CD14-positive monocyte (primary cell): ENCODE measurements at regions of chr17 and their contacts with region 1.

Region 1: DNA sequence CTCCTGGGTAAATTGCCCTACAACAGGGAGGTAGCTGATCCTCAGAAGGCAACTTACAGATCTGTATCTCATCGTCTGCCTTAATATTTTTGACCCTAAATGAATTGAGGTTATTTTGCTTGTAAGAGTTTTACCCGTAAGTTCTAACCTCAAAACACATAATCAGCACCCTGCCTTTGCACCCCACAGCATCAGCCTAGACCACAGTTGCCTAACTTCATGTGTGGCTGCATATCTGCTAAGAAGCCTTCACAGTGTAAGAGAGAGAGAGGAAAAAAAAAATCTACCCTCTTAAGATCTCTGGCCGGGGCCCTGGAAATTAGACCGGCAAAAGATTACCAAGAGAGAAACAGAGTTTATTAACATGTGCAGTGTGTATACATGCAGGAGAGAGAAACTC is 76.9 kb downstream of the ARHGAP44 start:
- DNase-seq: no peak
- H3K4me3 ChIP-seq: no peak overlapping the region
- H3K4me3 Mint-ChIP-seq: no peak overlapping the region
- H3K27ac ChIP-seq: no peak overlapping the region
- H3K27ac Mint-ChIP-seq: no peak overlapping the region
- H3K4me1 ChIP-seq: no peaks in the 10 kb centered on the region
- H3K4me1 Mint-ChIP-seq: no peaks in the 10 kb centered on the region
- H3K27me3 ChIP-seq: no peaks in the 10 kb centered on the region
- H3K27me3 Mint-ChIP-seq: no peaks in the 10 kb centered on the region
- CTCF ChIP-seq: no peak

Region 2: GRCh38 chr17:12815642-12816141 is 50.6 kb before region 1 on chr17:
- intact Hi-C with region 1: loop called in 1 of 2 experiments (anchors 10 kb)
- DNase-seq: no peak
- H3K4me3 ChIP-seq: no peak overlapping the region
- H3K4me3 Mint-ChIP-seq: no peak overlapping the region
- H3K27ac ChIP-seq: no peak overlapping the region
- H3K27ac Mint-ChIP-seq: no peak overlapping the region
- H3K4me1 ChIP-seq: no peaks in the 10 kb centered on the region
- H3K4me1 Mint-ChIP-seq: no peaks in the 10 kb centered on the region
- H3K27me3 ChIP-seq: no peaks in the 10 kb centered on the region
- H3K27me3 Mint-ChIP-seq: peaks cover 0 to 1% (median 0%) of the 10 kb centered on the region in 3 donors
- CTCF ChIP-seq: no peak

Region 3: DNA sequence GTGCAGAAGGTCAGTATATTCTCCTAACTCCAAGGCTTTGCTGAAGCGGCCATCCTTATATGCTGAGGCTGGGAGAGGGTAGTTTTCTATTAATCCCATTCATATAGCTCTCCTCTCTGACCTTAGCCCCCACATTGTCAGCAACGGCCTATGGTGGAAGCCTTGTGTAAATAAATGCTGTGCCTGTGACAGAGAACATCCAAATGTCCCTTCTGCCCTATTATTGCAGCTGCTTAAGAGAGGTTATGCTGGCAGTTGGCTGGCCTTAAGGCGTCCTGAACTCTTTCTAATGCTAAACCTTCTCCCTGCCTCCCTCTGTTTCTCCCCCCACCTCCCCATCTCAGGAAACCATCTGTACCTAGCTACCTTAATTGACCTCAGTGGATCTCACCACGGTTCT is 23.3 kb before region 1 on chr17:
- intact Hi-C with region 1: no loop called
- DNase-seq: no peak
- H3K4me3 ChIP-seq: no peak overlapping the region
- H3K4me3 Mint-ChIP-seq: no peak overlapping the region
- H3K27ac ChIP-seq: no peak overlapping the region
- H3K27ac Mint-ChIP-seq: no peak overlapping the region
- H3K4me1 ChIP-seq: no peaks in the 10 kb centered on the region
- H3K4me1 Mint-ChIP-seq: no peaks in the 10 kb centered on the region
- H3K27me3 ChIP-seq: no peaks in the 10 kb centered on the region
- H3K27me3 Mint-ChIP-seq: peaks cover 0 to 3% (median 0%) of the 10 kb centered on the region in 3 donors
- CTCF ChIP-seq: no peak

Region 4: DNA sequence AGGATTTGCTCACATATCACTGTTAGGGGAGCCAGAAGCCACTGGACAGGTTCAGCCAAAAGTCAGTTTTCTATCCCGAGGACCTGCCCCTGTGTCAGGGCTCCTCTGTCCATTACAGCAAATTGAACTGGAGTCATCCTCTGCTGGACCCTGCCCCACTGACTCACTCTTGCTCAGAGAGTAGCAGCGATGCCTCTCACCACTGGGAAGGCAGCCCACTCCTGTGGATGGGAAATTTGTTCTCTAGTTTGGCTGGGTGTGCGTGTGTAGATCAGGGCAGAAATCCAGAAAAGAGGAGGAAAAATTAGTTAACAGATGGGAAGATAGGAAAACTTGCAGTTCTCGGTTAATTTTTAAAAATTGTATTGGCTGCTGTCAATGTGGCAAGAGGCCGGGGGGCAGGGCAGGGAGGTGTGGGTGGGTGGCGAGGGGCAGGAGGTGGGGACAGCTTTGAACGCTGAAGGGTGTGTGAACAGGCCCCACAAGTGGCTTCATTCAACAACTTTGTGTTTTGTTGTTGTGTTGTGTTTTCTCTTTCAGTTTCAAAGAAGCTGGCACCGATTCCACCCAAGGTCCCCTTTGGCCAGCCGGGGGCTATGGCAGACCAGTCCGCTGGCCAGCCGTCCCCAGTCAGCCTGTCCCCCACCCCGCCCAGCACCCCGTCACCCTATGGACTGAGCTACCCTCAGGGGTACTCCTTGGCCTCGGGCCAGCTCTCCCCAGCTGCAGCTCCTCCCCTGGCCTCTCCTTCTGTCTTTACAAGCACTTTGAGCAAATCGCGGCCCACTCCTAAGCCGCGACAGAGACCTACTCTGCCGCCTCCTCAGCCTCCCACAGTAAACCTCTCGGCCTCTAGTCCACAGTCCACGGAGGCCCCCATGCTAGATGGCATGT is 118.0 kb after region 1 on chr17:
- intact Hi-C with region 1: no loop called
- DNase-seq: no peak
- H3K4me3 ChIP-seq: no peak overlapping the region
- H3K4me3 Mint-ChIP-seq: no peak overlapping the region
- H3K27ac ChIP-seq: no peak overlapping the region
- H3K27ac Mint-ChIP-seq: peak overlapping the region in 1 of 7 donors; percentile 2
- H3K4me1 ChIP-seq: no peaks in the 10 kb centered on the region
- H3K4me1 Mint-ChIP-seq: peaks cover 4% of the 10 kb centered on the region
- H3K27me3 ChIP-seq: no peaks in the 10 kb centered on the region
- H3K27me3 Mint-ChIP-seq: peaks cover 1 to 4% (median 1%) of the 10 kb centered on the region in 3 donors
- CTCF ChIP-seq: no peak

Region 5: GRCh38 chr17:13171790-13172189 is 305.5 kb after region 1 on chr17:
- intact Hi-C with region 1: no loop called
- DNase-seq: no peak
- H3K4me3 ChIP-seq: no peak overlapping the region
- H3K4me3 Mint-ChIP-seq: no peak overlapping the region
- H3K27ac ChIP-seq: no peak overlapping the region
- H3K27ac Mint-ChIP-seq: no peak overlapping the region
- H3K4me1 ChIP-seq: no peaks in the 10 kb centered on the region
- H3K4me1 Mint-ChIP-seq: no peaks in the 10 kb centered on the region
- H3K27me3 ChIP-seq: no peaks in the 10 kb centered on the region
- H3K27me3 Mint-ChIP-seq: peaks cover 0 to 2% (median 0%) of the 10 kb centered on the region in 3 donors
- CTCF ChIP-seq: no peak